HCT116 (cell line): ENCODE measurements at regions of chr16 and their contacts with region 1.

Region 1: GRCh38 chr16:81403616-81404373 is 40.8 kb upstream of the CMIP start:
- DNase-seq: peak; percentile 85
- ATAC-seq: peak; percentile 63
- H3K4me3 ChIP-seq: peak overlapping the region; percentile 15 to 30; a peak in 3 of 4 replicates
- H3K27ac ChIP-seq: peak overlapping the region; percentile 63; the same call in 1 of the 2 replicates
- H3K4me1 ChIP-seq: peaks cover 52 to 82% of the 10 kb centered on the region in 2 experiments
- H3K27me3 ChIP-seq: no peaks in the 10 kb centered on the region
- CTCF ChIP-seq: peak in 2 of 3 experiments; percentile 97 to 100; a peak in 4 of 6 replicates
- POLR2A ChIP-seq: no peak
- RAD21 ChIP-seq: no peak

Region 2: DNA sequence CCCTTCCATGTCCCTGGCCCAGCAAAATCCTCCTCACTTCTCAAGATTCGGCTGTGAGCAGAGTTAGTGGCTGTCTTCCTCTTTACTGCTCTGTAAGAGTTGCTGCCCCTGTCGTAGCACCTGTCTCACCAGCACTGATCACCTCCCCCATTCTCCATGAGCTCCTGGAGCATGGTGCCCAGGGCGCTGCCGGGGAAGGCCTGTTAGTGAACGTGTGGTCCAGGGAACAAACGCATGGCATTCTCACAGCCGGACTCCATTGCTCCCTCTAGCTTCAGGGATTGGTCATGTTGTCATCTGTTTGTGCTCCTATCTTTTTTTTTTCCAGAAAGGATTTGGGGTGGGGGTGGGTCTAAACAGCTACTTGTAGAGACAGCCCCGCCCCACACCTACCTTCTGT is 182.0 kb after region 1 on chr16:
- CTCF ChIA-PET with region 1: interaction called, 5 read pairs
- POLR2A ChIA-PET with region 1: no interaction called
- RAD21 ChIA-PET with region 1: interaction called, 3 to 4 read pairs
- intact Hi-C with region 1: loop called (anchors 1 kb)
- DNase-seq: peak; percentile 64
- ATAC-seq: peak; percentile 47
- H3K4me3 ChIP-seq: peak overlapping the region; percentile 13 to 41; a peak in 3 of 4 replicates
- H3K27ac ChIP-seq: peak overlapping the region; percentile 69
- H3K4me1 ChIP-seq: peaks cover 72 to 80% of the 10 kb centered on the region in 2 experiments
- H3K27me3 ChIP-seq: no peaks in the 10 kb centered on the region
- CTCF ChIP-seq: peak in 2 of 3 experiments; percentile 69 to 76; a peak in 4 of 6 replicates
- POLR2A ChIP-seq: no peak
- RAD21 ChIP-seq: no peak

Region 3: GRCh38 chr16:81623363-81624102 is 219.7 kb after region 1 on chr16:
- CTCF ChIA-PET with region 1: interaction called, 7 read pairs
- POLR2A ChIA-PET with region 1: no interaction called
- RAD21 ChIA-PET with region 1: no interaction called
- intact Hi-C with region 1: loop called (anchors 1 kb)
- DNase-seq: peak; percentile 53
- ATAC-seq: peak; percentile 70
- H3K4me3 ChIP-seq: no peak overlapping the region
- H3K27ac ChIP-seq: no peak overlapping the region
- H3K4me1 ChIP-seq: peaks cover 5 to 35% of the 10 kb centered on the region in 2 experiments; a peak in 3 of 4 replicates
- H3K27me3 ChIP-seq: no peaks in the 10 kb centered on the region
- CTCF ChIP-seq: peak; percentile 72 to 95 (median 93)
- POLR2A ChIP-seq: no peak
- RAD21 ChIP-seq: peak; percentile 99

Region 4: GRCh38 chr16:81696961-81697615 is 293.3 kb after region 1 on chr16:
- CTCF ChIA-PET with region 1: interaction called, 14 read pairs
- POLR2A ChIA-PET with region 1: no interaction called
- RAD21 ChIA-PET with region 1: no interaction called
- intact Hi-C with region 1: loop called (anchors 1 kb)
- DNase-seq: peak; percentile 51
- ATAC-seq: peak; percentile 84
- H3K4me3 ChIP-seq: no peak overlapping the region
- H3K27ac ChIP-seq: no peak overlapping the region
- H3K4me1 ChIP-seq: peaks cover 0 to 20% of the 10 kb centered on the region in 2 experiments; a peak in 2 of 4 replicates
- H3K27me3 ChIP-seq: no peaks in the 10 kb centered on the region
- CTCF ChIP-seq: peak; percentile 89 to 96 (median 96)
- POLR2A ChIP-seq: no peak
- RAD21 ChIP-seq: peak; percentile 98